Activated naive CD4-positive, alpha-beta T cell treated with anti-CD3 and anti-CD28 coated beads for 36 hours (primary cell): ENCODE measurements at regions of chr14 and their contacts with region 1.

Region 1: DNA sequence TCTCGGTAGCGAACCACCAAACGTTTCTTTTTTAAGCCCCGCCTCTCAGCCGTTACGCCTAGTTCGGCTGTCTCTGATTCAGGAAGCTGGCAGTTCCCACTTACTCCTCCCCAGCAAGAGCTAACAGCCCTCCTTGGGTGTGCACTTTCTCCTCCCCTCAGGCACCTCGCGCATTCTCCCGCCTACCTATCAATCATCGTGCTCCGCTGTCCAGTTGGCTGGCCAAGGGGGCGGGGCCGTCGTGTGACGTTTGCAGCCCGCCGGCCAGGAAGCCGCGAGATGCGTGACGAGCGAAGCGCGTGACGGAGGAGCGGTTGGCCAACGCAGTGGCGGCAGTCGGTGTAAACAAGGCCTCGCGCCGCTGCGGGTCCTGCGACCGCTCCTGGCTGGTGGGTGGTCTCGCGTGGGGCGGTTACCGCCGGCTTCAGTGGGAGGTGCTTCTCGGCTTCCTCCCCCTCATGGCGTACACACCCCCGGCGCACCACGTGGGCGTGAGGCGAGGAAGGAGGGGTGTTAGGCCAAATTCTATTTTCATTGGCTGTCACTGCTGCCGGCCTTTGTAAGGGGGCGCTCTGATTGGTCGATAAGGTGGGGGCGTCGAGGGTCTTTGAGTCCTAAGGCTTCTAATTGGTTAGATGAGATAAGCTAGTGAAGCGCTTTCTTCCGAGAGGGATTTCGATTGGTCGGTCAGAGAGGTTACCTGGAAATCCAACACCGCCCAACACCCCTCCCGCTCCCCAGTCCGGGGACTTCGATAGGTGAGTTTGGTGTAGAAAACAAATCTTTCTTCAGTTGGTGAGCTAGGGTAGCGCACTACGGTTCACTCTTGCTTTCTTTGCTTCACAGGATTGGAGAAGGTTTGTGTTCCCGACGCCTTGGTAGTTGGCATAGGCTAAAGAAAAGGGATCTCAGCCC is at the starts of genes DCAF11 and NRL:
- DNase-seq: peak; percentile 99
- H3K4me3 Mint-ChIP-seq: peak within 1 kb of the TSS; percentile 99
- H3K27ac Mint-ChIP-seq: peak within 1 kb of the TSS; percentile 100
- H3K4me1 Mint-ChIP-seq: peaks cover 18% of the 10 kb centered on the region
- H3K27me3 Mint-ChIP-seq: no peaks in the 10 kb centered on the region
- total RNA-seq, gene DCAF11: 79.4 to 84.0 TPM
- total RNA-seq, gene NRL: 1.7 to 1.9 TPM

Region 2: GRCh38 chr14:23567192-23568020 is 547.4 kb before region 1 on chr14 and contains the start of gene AP1G2:
- CTCF ChIA-PET with region 1: no interaction called
- intact Hi-C with region 1: loop called (anchors 1 kb)
- DNase-seq: peak; percentile 96
- H3K4me3 Mint-ChIP-seq: peak within 1 kb of the TSS; percentile 100
- H3K27ac Mint-ChIP-seq: peak within 1 kb of the TSS; percentile 97
- H3K4me1 Mint-ChIP-seq: peaks cover 26% of the 10 kb centered on the region
- H3K27me3 Mint-ChIP-seq: no peaks in the 10 kb centered on the region
- total RNA-seq, gene AP1G2: 205 to 216 TPM

Region 3: GRCh38 chr14:24080888-24081738 is 33.7 kb before region 1 on chr14:
- CTCF ChIA-PET with region 1: interaction called, 50 read pairs
- intact Hi-C with region 1: loop called (anchors 1 kb)
- DNase-seq: peak; percentile 74
- H3K4me3 Mint-ChIP-seq: peak overlapping the region; percentile 74
- H3K27ac Mint-ChIP-seq: no peak overlapping the region
- H3K4me1 Mint-ChIP-seq: peaks cover 15% of the 10 kb centered on the region
- H3K27me3 Mint-ChIP-seq: no peaks in the 10 kb centered on the region

Region 4: GRCh38 chr14:24141097-24141880 is 26.5 kb after region 1 on chr14 and contains the start of gene EMC9:
- CTCF ChIA-PET with region 1: interaction called, 43 read pairs
- intact Hi-C with region 1: loop called (anchors 1 kb)
- DNase-seq: peak; percentile 100
- H3K4me3 Mint-ChIP-seq: peak within 1 kb of the TSS; percentile 99
- H3K27ac Mint-ChIP-seq: peak within 1 kb of the TSS; percentile 93
- H3K4me1 Mint-ChIP-seq: peaks cover 73% of the 10 kb centered on the region
- H3K27me3 Mint-ChIP-seq: no peaks in the 10 kb centered on the region
- total RNA-seq, gene EMC9: 38.4 to 38.9 TPM

Region 5: GRCh38 chr14:24195191-24196070 is 80.6 kb after region 1 on chr14 and contains the start of gene TM9SF1:
- CTCF ChIA-PET with region 1: no interaction called
- intact Hi-C with region 1: loop called (anchors 1 kb)
- DNase-seq: peak; percentile 89
- H3K4me3 Mint-ChIP-seq: peak within 1 kb of the TSS; percentile 96
- H3K27ac Mint-ChIP-seq: peak within 1 kb of the TSS; percentile 93
- H3K4me1 Mint-ChIP-seq: peaks cover 56% of the 10 kb centered on the region
- H3K27me3 Mint-ChIP-seq: no peaks in the 10 kb centered on the region
- total RNA-seq, gene TM9SF1: 14.7 to 15.1 TPM

Region 6: GRCh38 chr14:24271134-24271833 is 156.5 kb after region 1 on chr14 and contains the start of gene RABGGTA:
- CTCF ChIA-PET with region 1: no interaction called
- intact Hi-C with region 1: loop called (anchors 1 kb)
- DNase-seq: peak; percentile 94
- H3K4me3 Mint-ChIP-seq: peak within 1 kb of the TSS; percentile 78
- H3K27ac Mint-ChIP-seq: peak within 1 kb of the TSS; percentile 95
- H3K4me1 Mint-ChIP-seq: peaks cover 43% of the 10 kb centered on the region
- H3K27me3 Mint-ChIP-seq: no peaks in the 10 kb centered on the region
- total RNA-seq, gene RABGGTA: 74.9 to 76.2 TPM

Region 7: GRCh38 chr14:24442273-24443052 is 327.7 kb after region 1 on chr14 and contains the start of gene SDR39U1:
- CTCF ChIA-PET with region 1: no interaction called
- intact Hi-C with region 1: loop called (anchors 1 kb)
- DNase-seq: peak; percentile 99
- H3K4me3 Mint-ChIP-seq: peak within 1 kb of the TSS; percentile 89
- H3K27ac Mint-ChIP-seq: peak within 1 kb of the TSS; percentile 98
- H3K4me1 Mint-ChIP-seq: peaks cover 39% of the 10 kb centered on the region
- H3K27me3 Mint-ChIP-seq: no peaks in the 10 kb centered on the region
- total RNA-seq, gene SDR39U1: 70.5 to 72.4 TPM